Activated CD4-positive, alpha-beta memory T cell treated with anti-CD3 and anti-CD28 coated beads for 36 hours (primary cell): ENCODE measurements at regions of chr7 and their contacts with region 1.

Region 1: DNA sequence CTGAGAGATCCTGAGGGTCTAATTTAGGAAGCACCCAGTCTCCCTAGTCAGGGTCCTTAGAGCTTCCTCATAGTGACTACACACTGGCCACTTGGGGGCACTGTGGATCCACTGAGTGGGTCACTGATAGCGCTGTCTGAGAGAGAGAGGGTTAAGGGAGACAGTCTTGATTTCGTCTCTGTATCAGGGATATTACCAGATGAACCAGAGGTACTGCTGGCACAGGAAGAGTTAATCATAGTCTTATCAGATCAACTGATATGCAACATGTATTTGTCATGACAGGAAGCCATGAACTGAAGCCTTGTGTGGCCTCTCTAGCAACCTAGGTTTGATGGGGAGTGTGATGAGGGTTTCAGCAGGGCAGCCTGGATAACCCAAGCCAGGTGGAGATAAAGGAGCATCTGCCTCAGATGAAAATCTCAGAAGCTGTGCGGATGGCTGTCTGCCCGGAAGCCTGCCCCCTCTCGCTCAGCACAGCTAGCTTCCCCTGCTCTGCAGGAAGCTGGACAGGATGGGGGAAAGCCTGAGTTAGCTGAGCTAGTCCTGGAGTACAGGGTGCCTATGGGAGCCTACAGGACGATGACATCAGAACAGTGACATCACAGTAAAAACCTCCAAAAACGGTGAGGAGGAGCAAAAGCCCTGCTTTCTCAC is 214.0 kb upstream of the PRSS1 start:
- DNase-seq: peak; percentile 89
- H3K4me3 Mint-ChIP-seq: peak overlapping the region; percentile 67
- H3K27ac Mint-ChIP-seq: peak overlapping the region; percentile 86
- H3K4me1 Mint-ChIP-seq: peaks cover 32% of the 10 kb centered on the region
- H3K27me3 Mint-ChIP-seq: peaks cover 3% of the 10 kb centered on the region

Region 2: GRCh38 chr7:142250705-142251104 is 284.5 kb before region 1 on chr7:
- CTCF ChIA-PET with region 1: no interaction called
- POLR2A ChIA-PET with region 1: no interaction called
- intact Hi-C with region 1: no loop called
- DNase-seq: no peak
- H3K4me3 Mint-ChIP-seq: no peak overlapping the region
- H3K27ac Mint-ChIP-seq: no peak overlapping the region
- H3K4me1 Mint-ChIP-seq: no peaks in the 10 kb centered on the region
- H3K27me3 Mint-ChIP-seq: peaks cover 5% of the 10 kb centered on the region

Region 3: GRCh38 chr7:142352543-142352942 is 182.7 kb before region 1 on chr7:
- CTCF ChIA-PET with region 1: no interaction called
- POLR2A ChIA-PET with region 1: no interaction called
- intact Hi-C with region 1: no loop called
- DNase-seq: peak; percentile 47
- H3K4me3 Mint-ChIP-seq: peak overlapping the region; percentile 74
- H3K27ac Mint-ChIP-seq: peak overlapping the region; percentile 81
- H3K4me1 Mint-ChIP-seq: peaks cover 31% of the 10 kb centered on the region
- H3K27me3 Mint-ChIP-seq: no peaks in the 10 kb centered on the region

Region 4: GRCh38 chr7:142478479-142479072 is 56.7 kb before region 1 on chr7:
- CTCF ChIA-PET with region 1: interaction called, 10 read pairs
- POLR2A ChIA-PET with region 1: no interaction called
- intact Hi-C with region 1: no loop called
- DNase-seq: peak; percentile 48
- H3K4me3 Mint-ChIP-seq: no peak overlapping the region
- H3K27ac Mint-ChIP-seq: peak overlapping the region; percentile 49
- H3K4me1 Mint-ChIP-seq: peaks cover 76% of the 10 kb centered on the region
- H3K27me3 Mint-ChIP-seq: no peaks in the 10 kb centered on the region

Region 5: GRCh38 chr7:142496545-142497041 is 38.7 kb before region 1 on chr7:
- CTCF ChIA-PET with region 1: interaction called, 10 read pairs
- POLR2A ChIA-PET with region 1: no interaction called
- intact Hi-C with region 1: no loop called
- DNase-seq: peak; percentile 39
- H3K4me3 Mint-ChIP-seq: peak overlapping the region; percentile 47
- H3K27ac Mint-ChIP-seq: peak overlapping the region; percentile 7
- H3K4me1 Mint-ChIP-seq: peaks cover 34% of the 10 kb centered on the region
- H3K27me3 Mint-ChIP-seq: no peaks in the 10 kb centered on the region

Region 6: GRCh38 chr7:142523821-142524460 is 11.3 kb before region 1 on chr7:
- CTCF ChIA-PET with region 1: interaction called, 15 read pairs
- POLR2A ChIA-PET with region 1: no interaction called
- intact Hi-C with region 1: no loop called
- DNase-seq: no peak
- H3K4me3 Mint-ChIP-seq: no peak overlapping the region
- H3K27ac Mint-ChIP-seq: no peak overlapping the region
- H3K4me1 Mint-ChIP-seq: peaks cover 14% of the 10 kb centered on the region
- H3K27me3 Mint-ChIP-seq: no peaks in the 10 kb centered on the region

Region 7: GRCh38 chr7:142557971-142558582 is 22.8 kb after region 1 on chr7:
- CTCF ChIA-PET with region 1: interaction called, 20 read pairs
- POLR2A ChIA-PET with region 1: no interaction called
- intact Hi-C with region 1: loop called (anchors 1 kb)
- DNase-seq: peak; percentile 65
- H3K4me3 Mint-ChIP-seq: peak overlapping the region; percentile 28
- H3K27ac Mint-ChIP-seq: peak overlapping the region; percentile 35
- H3K4me1 Mint-ChIP-seq: peaks cover 5% of the 10 kb centered on the region
- H3K27me3 Mint-ChIP-seq: peaks cover 3% of the 10 kb centered on the region

Region 8: DNA sequence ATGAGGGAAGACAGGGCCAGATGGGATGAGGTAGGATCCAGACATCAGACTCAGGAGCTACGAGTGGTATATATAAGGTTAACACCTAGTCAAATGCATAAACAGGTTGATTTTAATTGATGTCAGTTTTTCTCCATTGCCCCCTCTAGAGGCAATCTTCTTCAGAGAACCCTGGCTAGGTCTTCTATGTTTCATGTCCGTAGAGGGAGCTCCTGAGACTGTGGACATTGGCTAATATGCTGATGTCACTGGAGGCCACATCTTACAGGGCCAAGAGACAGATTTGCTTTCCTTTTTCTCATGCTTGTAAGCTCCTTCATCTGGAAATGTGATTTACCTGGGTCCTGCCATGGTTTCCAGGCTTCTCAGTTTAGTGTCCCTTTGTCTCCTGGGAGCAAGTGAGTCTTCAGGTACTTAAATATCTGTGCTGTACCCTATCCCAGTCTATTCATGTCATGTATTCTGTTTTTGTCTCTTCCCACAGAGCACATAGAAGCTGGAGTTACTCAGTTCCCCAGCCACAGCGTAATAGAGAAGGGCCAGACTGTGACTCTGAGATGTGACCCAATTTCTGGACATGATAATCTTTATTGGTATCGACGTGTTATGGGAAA is 52.4 kb after region 1 on chr7:
- CTCF ChIA-PET with region 1: interaction called, 22 read pairs
- POLR2A ChIA-PET with region 1: interaction called, 3 read pairs
- intact Hi-C with region 1: loop called (anchors 1 kb)
- DNase-seq: no peak
- H3K4me3 Mint-ChIP-seq: no peak overlapping the region
- H3K27ac Mint-ChIP-seq: peak overlapping the region; percentile 54
- H3K4me1 Mint-ChIP-seq: peaks cover 8% of the 10 kb centered on the region
- H3K27me3 Mint-ChIP-seq: no peaks in the 10 kb centered on the region

Region 9: GRCh38 chr7:142626420-142627035 is 91.3 kb after region 1 on chr7:
- CTCF ChIA-PET with region 1: interaction called, 11 read pairs
- POLR2A ChIA-PET with region 1: no interaction called
- intact Hi-C with region 1: loop called (anchors 2 kb)
- DNase-seq: peak; percentile 79
- H3K4me3 Mint-ChIP-seq: peak overlapping the region; percentile 78
- H3K27ac Mint-ChIP-seq: peak overlapping the region; percentile 86
- H3K4me1 Mint-ChIP-seq: no peaks in the 10 kb centered on the region
- H3K27me3 Mint-ChIP-seq: no peaks in the 10 kb centered on the region

Region 10: DNA sequence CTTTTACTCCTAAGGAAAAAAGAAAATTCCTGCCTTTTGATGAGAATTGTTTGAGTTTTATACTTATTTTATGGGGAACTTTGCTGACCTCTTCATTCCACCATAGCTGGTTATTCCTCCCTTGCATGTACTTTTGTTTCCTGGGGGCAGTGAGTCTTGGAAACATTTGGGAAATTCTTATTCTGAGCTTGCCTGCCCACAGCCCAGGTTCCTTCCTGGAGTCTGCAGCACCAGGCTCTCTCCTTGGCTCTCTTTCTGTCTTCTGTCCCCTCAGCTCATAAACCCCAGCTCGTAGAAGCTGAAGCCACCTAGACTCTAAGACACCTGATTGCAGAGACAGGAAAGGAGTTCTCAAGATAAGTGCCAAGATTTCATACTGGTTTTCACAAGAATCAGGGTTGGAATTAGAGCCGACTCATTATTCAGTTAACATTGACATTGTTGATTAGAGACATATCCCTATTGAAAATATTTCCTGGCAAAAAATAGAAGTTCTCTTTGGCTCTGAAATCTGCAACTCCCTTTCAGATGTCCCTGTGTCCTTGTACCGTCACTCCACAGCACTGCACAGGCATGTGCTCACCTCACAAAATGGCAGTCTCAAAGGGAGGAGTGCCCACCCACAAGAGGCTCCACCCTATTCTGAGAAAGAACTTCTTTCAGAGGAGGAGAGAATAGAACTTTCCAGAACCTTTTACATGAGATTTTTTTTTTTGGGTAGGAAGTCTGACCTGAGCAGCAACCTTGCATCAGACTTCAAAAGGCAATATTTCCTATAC is 146.3 kb after region 1 on chr7:
- CTCF ChIA-PET with region 1: no interaction called
- POLR2A ChIA-PET with region 1: no interaction called
- intact Hi-C with region 1: no loop called
- DNase-seq: no peak
- H3K4me3 Mint-ChIP-seq: no peak overlapping the region
- H3K27ac Mint-ChIP-seq: no peak overlapping the region
- H3K4me1 Mint-ChIP-seq: peaks cover 26% of the 10 kb centered on the region
- H3K27me3 Mint-ChIP-seq: no peaks in the 10 kb centered on the region